ENCODE measurements at regions of chr7 and their contacts with region 1.

Region 1: GRCh38 chr7:149195180-149196150 is at the start of gene ZNF282:
- DNase-seq: peak; percentile 93
- H3K4me3 Mint-ChIP-seq: peak within 1 kb of the TSS; percentile 85
- H3K27ac Mint-ChIP-seq: peak within 1 kb of the TSS; percentile 94
- H3K4me1 Mint-ChIP-seq: peaks cover 14% of the 10 kb centered on the region
- H3K27me3 Mint-ChIP-seq: no peaks in the 10 kb centered on the region
- CTCF ChIP-seq: peak; percentile 52
- total RNA-seq, gene ZNF282: 43.9 and 46.4 TPM in 2 replicates

Region 2: GRCh38 chr7:149010451-149011010 is 184.9 kb before region 1 on chr7:
- CTCF ChIA-PET with region 1: no interaction called
- POLR2A ChIA-PET with region 1: no interaction called
- intact Hi-C with region 1: no loop called
- DNase-seq: no peak
- H3K4me3 Mint-ChIP-seq: no peak overlapping the region
- H3K27ac Mint-ChIP-seq: no peak overlapping the region
- H3K4me1 Mint-ChIP-seq: no peaks in the 10 kb centered on the region
- H3K27me3 Mint-ChIP-seq: no peaks in the 10 kb centered on the region
- CTCF ChIP-seq: no peak

Region 3: DNA sequence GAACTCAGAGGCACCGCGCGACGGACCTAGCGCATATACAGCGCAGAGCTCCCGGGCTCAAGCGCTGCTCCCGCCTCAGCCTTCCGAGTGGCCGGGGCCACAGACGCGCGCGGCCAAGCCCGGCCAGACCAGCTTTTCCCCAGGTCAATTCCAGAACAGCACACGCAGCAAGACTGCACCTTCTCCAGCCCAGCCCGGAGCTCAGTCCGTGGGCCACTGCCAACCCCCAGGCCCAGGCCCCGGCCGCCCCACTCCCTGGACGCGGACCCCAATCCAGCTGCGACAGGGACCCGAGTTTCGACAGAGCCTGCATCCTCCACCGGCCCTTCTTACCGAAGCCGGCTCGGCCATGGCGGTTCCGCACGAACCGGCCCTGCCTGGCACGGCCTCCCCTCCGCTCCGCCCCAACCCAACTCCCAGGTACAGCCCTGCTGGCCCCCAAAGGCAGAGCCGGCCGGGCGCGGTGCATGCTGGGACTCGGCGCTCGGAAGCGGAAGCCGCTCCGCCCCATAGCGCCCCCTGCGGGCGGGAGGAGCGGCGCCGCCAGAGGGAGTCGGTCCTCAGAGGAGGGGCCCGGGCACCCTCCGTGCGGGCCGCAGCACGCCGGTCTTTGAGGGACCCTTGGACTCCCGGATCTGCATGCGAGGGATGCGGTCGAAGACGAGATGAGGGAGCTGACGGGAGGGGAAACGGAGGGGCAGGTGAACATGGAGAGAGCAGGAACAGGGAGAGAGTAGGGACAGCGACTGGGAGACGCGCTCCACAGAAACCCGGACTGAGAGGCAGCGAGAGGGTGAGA is 69.4 kb before region 1 on chr7 and contains the start of gene ZNF425:
- CTCF ChIA-PET with region 1: interaction called, 15 read pairs
- POLR2A ChIA-PET with region 1: interaction called, 23 read pairs
- intact Hi-C with region 1: loop called (anchors 2 kb)
- DNase-seq: peak; percentile 93
- H3K4me3 Mint-ChIP-seq: peak within 1 kb of the TSS; percentile 97
- H3K27ac Mint-ChIP-seq: peak within 1 kb of the TSS; percentile 99
- H3K4me1 Mint-ChIP-seq: peaks cover 18% of the 10 kb centered on the region
- H3K27me3 Mint-ChIP-seq: no peaks in the 10 kb centered on the region
- CTCF ChIP-seq: peak; percentile 89
- total RNA-seq, gene ZNF425: 2.6 and 3.3 TPM in 2 replicates

Region 4: GRCh38 chr7:149180722-149181449 is 14.6 kb before region 1 on chr7:
- CTCF ChIA-PET with region 1: interaction called, 13 read pairs
- POLR2A ChIA-PET with region 1: interaction called, 34 read pairs
- intact Hi-C with region 1: no loop called
- DNase-seq: peak; percentile 32
- H3K4me3 Mint-ChIP-seq: no peak overlapping the region
- H3K27ac Mint-ChIP-seq: peak overlapping the region; percentile 35
- H3K4me1 Mint-ChIP-seq: peaks cover 15% of the 10 kb centered on the region
- H3K27me3 Mint-ChIP-seq: no peaks in the 10 kb centered on the region
- CTCF ChIP-seq: no peak

Region 5: DNA sequence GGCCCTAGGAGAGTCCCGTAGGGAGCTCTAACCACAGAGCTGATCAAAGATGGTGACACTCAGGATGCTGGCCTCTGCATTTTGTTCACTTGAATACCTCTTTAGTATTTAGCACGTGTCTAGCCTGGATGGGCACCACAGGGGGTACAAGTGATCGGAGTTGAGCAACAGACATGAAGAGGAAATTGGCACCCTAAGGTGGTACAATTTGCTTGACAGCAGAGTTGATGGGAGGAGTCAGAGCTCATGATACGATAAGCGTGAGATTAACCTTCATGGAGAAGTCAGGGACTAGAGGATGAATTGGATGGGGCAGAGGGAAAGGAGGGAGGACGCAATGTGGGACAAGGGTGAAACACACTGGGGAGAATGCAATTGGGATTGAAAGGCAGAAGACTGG is 34.1 kb after region 1 on chr7:
- CTCF ChIA-PET with region 1: interaction called, 3 read pairs
- POLR2A ChIA-PET with region 1: interaction called, 25 read pairs
- intact Hi-C with region 1: no loop called
- DNase-seq: no peak
- H3K4me3 Mint-ChIP-seq: no peak overlapping the region
- H3K27ac Mint-ChIP-seq: no peak overlapping the region
- H3K4me1 Mint-ChIP-seq: peaks cover 17% of the 10 kb centered on the region
- H3K27me3 Mint-ChIP-seq: no peaks in the 10 kb centered on the region
- CTCF ChIP-seq: no peak

Region 6: DNA sequence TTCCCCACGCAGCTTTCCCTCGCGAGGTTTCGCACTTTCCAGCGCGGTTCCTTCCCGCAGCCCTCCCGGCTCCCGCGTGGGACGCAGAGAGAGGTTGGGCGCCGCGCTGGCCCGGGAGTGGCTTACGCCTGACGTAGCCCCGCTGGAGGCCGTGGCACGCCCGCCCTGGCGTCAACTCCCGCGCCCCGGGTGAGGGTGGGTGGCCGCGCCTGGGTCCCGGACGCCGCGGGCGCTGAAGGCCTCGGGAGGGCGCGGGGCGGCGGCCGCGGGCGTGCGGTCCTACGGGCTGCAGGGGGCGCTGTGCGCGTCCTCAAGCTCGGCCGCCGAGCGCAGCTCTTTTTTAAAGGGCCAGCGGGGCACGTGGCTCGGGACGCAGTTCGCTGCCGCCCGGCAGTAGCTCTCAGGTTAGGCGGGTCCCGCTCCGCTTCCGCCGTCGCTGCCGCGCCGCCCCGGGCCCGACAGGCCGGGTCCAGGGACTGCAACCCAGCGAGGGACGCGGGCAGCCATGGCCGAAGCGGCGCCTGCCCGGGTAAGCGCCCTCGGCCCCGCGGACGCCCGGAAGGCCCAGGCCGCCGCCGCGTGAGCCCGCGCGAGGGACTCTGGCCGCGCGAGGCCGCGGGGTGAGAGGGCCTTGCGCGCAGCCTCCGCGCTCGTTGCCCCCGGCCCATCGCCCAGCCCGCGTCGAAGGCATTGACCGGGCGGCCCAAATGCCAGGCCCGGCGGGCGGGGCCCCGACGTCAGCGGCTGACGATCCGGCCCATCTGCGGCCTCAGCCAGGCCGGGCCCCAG is 66.6 kb after region 1 on chr7 and contains the start of gene ZNF783:
- CTCF ChIA-PET with region 1: interaction called, 16 read pairs
- POLR2A ChIA-PET with region 1: interaction called, 15 read pairs
- intact Hi-C with region 1: loop called (anchors 5 kb)
- DNase-seq: peak; percentile 81
- H3K4me3 Mint-ChIP-seq: peak within 1 kb of the TSS; percentile 78
- H3K27ac Mint-ChIP-seq: peak within 1 kb of the TSS; percentile 93
- H3K4me1 Mint-ChIP-seq: peaks cover 17% of the 10 kb centered on the region
- H3K27me3 Mint-ChIP-seq: no peaks in the 10 kb centered on the region
- CTCF ChIP-seq: peak; percentile 82
- total RNA-seq, gene ZNF783: 39.5 and 49.0 TPM in 2 replicates